A549 (cell line): ENCODE measurements at regions of chr12 and their contacts with region 1.

Region 1: GRCh38 chr12:124940549-124941527 is 26.4 kb upstream of the UBC start:
- DNase-seq: peak; percentile 75 to 96
- ATAC-seq: peak; percentile 69 to 72
- H3K4me3 ChIP-seq: peak overlapping the region; percentile 32
- H3K27ac ChIP-seq: peak overlapping the region; percentile 88 to 92
- H3K4me1 ChIP-seq: peaks cover 29% of the 10 kb centered on the region
- CTCF ChIP-seq: peak; percentile 78
- EP300 ChIP-seq: no peak
- POLR2A ChIP-seq: peak; percentile 53
- RAD21 ChIP-seq: peak; percentile 53 to 59

Region 2: DNA sequence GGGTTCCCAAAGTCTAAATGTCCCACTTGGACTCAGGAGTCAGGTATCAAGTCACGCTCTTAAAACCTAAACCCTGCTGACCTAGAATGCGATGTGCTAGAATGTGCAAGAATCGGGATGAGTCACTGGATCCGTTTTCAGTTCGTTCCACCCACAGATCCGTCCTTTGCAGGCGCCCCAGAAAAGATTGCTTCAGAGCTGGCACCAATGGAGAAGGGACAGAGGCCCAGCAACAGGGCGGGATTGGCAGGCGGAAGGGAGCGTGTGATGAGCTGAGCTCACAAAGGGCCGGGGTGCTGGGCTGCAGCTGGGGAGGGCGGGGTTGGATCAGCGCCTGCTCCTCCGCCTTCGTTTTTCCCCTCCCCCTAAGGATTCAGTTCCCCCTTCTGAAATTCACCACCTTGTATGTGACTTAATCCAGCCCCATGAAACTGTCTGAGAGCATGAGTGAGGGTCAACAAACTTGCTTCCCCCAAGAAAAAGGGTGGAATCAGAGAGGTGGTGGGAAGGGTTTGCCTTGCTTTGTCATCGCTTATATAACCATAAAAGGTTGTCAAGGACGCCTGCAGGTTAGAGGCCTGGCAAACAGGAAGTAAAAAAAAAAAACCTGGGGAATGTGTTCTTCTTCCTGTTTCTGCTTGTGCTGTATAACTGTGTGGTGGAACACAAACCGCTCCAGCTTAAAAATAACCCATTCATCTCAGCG is 23.6 kb before region 1 on chr12:
- CTCF ChIA-PET with region 1: interaction called, 147 read pairs
- POLR2A ChIA-PET with region 1: interaction called, 125 read pairs
- DNase-seq: peak; percentile 77 to 100
- ATAC-seq: peak; percentile 76 to 81
- H3K4me3 ChIP-seq: peak overlapping the region; percentile 42
- H3K27ac ChIP-seq: peak overlapping the region; percentile 97 to 98
- H3K4me1 ChIP-seq: peaks cover 47% of the 10 kb centered on the region
- CTCF ChIP-seq: no peak
- EP300 ChIP-seq: peak; percentile 14 to 70; a peak in 2 of 5 replicates
- POLR2A ChIP-seq: no peak
- RAD21 ChIP-seq: peak; percentile 10 to 17; a peak in 2 of 5 replicates

Region 3: GRCh38 chr12:124927201-124928094 is 13.4 kb before region 1 on chr12:
- CTCF ChIA-PET with region 1: interaction called, 147 read pairs
- POLR2A ChIA-PET with region 1: interaction called, 32 read pairs
- DNase-seq: peak; percentile 81 to 95
- ATAC-seq: peak; percentile 76 to 77
- H3K4me3 ChIP-seq: peak overlapping the region; percentile 59
- H3K27ac ChIP-seq: peak overlapping the region; percentile 97 to 98
- H3K4me1 ChIP-seq: peaks cover 34% of the 10 kb centered on the region
- CTCF ChIP-seq: no peak
- EP300 ChIP-seq: no peak
- POLR2A ChIP-seq: no peak
- RAD21 ChIP-seq: no peak

Region 4: DNA sequence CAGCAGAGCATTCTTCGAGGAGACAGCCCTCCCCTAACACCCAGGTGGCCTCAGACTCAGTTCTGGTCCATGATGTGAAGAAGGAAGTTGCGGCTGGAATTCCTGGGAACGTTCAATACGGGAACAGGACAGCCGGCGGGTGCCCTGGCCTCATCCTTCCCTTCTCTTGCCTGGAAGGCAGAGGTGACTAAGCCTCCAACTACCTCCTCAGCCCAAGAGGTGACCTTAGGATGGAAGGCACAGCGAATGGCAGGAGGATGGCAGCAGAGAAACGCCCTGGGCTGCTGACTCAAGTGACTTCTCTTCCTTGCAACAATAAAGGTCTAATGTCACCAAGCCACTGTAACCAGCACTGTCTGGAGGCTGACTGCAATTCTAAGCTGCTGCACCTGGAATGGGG is 12.0 kb after region 1 on chr12:
- CTCF ChIA-PET with region 1: interaction called, 96 read pairs
- POLR2A ChIA-PET with region 1: no interaction called
- DNase-seq: no peak
- ATAC-seq: no peak
- H3K4me3 ChIP-seq: no peak overlapping the region
- H3K27ac ChIP-seq: no peak overlapping the region
- H3K4me1 ChIP-seq: no peaks in the 10 kb centered on the region
- CTCF ChIP-seq: no peak
- EP300 ChIP-seq: no peak
- POLR2A ChIP-seq: no peak
- RAD21 ChIP-seq: no peak

Region 5: GRCh38 chr12:124961726-124962125 is 20.9 kb after region 1 on chr12:
- CTCF ChIA-PET with region 1: interaction called, 96 read pairs
- POLR2A ChIA-PET with region 1: interaction called, 4 read pairs
- DNase-seq: no peak
- ATAC-seq: no peak
- H3K4me3 ChIP-seq: no peak overlapping the region
- H3K27ac ChIP-seq: no peak overlapping the region
- H3K4me1 ChIP-seq: no peaks in the 10 kb centered on the region
- CTCF ChIP-seq: no peak
- EP300 ChIP-seq: no peak
- POLR2A ChIP-seq: no peak
- RAD21 ChIP-seq: no peak

Region 6: DNA sequence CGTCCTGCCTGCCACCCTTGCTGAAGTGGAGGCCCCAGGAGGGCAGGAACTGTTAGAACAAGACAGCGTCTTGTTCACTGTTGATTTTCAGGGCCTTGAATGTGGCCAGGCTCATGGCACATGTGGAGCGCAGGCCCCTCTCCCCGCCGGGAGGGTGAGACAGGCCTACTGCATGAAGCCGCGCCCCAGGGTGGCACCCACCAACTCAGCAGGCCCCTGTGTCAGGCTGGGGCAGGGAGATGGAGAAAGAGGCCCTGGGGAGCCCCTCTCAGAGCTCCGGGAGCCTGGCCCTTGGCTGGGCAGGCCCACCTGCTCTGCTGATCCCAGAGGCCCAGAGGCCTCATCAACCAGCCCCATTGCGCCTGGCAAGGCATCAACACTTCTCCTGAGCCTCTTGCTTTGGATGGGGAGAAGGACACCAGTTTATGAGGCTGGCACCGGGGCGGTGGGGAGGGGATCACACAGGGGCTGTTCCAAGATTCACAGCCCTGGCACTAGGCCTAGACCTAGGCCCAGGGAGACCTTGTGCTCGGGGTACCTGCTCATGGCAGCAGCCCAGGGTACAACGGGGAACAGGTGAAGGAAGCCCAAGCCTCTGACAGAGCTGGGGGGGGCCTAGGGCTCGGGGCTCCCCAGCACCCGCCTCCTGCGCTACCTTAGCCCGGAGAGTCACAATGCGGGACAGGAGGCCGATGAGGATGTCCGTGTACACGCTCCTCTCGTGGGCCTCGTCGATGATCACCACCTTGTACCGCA is 30.0 kb after region 1 on chr12:
- CTCF ChIA-PET with region 1: interaction called, 12 read pairs
- POLR2A ChIA-PET with region 1: no interaction called
- DNase-seq: no peak
- ATAC-seq: no peak
- H3K4me3 ChIP-seq: no peak overlapping the region
- H3K27ac ChIP-seq: no peak overlapping the region
- H3K4me1 ChIP-seq: no peaks in the 10 kb centered on the region
- CTCF ChIP-seq: no peak
- EP300 ChIP-seq: no peak
- POLR2A ChIP-seq: no peak
- RAD21 ChIP-seq: no peak

Region 7: GRCh38 chr12:124992874-124993625 is 52.2 kb after region 1 on chr12:
- CTCF ChIA-PET with region 1: interaction called, 12 read pairs
- POLR2A ChIA-PET with region 1: interaction called, 5 read pairs
- DNase-seq: peak; percentile 86 to 97
- ATAC-seq: peak; percentile 69 to 71
- H3K4me3 ChIP-seq: peak overlapping the region; percentile 81
- H3K27ac ChIP-seq: peak overlapping the region; percentile 82 to 98
- H3K4me1 ChIP-seq: peaks cover 12% of the 10 kb centered on the region
- CTCF ChIP-seq: peak; percentile 45
- EP300 ChIP-seq: no peak
- POLR2A ChIP-seq: 0 out of 2 replicates have a peak, but pooled peaks have one; percentile 13
- RAD21 ChIP-seq: 0 out of 5 replicates have a peak, but pooled peaks of 1 of the 2 experiments have one; percentile 11